Right ventricle myocardium inferior (tissue), 1 donor: ENCODE measurements at regions of chr17 and their contacts with region 1.

Region 1: GRCh38 chr17:2401426-2402221 is 764 bp upstream of the MNT start:
- DNase-seq: peak; percentile 100
- ATAC-seq: peak; percentile 71

Region 2: DNA sequence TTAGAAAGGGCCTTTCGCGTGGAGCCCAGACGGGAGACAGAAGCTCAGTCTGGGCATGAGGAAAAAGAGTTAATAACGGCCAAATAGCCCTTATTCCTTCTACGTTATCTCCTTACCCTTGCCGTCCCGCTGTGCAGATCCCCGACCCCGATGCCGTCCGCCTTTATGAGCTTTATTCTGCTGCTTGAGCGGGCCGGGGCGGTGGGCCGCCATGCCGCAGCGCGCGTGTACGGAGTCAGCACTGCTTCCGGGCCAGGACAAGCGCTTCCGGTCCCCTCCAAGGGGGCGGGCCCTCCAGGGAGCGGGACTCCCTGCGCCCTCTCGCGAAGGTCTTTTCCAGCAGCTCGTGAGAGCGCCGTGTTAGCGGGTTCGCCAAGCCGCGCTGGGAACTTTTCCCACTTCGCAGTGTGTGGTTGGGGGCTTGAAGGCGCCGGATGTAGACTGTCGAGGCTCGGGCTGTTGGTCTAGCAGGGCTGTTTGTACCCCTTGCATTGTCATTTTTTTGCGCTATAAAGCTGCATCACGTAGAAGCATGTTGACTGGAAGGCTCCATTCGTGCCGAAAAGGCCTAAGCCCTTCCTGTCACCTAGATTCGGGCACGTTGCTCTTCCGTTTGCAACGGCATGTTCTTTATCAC is 65.3 kb before region 1 on chr17 and contains the start of gene TSR1:
- intact Hi-C with region 1: loop called (anchors 5 kb)
- DNase-seq: peak; percentile 95
- ATAC-seq: peak; percentile 97
- total RNA-seq, gene TSR1: 20.2 TPM

Region 3: GRCh38 chr17:2416010-2416734 is 14.5 kb after region 1 on chr17:
- intact Hi-C with region 1: loop called (anchors 1 kb)
- DNase-seq: peak; percentile 93
- ATAC-seq: peak; percentile 75

Region 4: GRCh38 chr17:2711601-2712299 is 310.1 kb after region 1 on chr17 and contains the start of gene CLUH:
- intact Hi-C with region 1: loop called (anchors 5 kb)
- DNase-seq: peak; percentile 99
- ATAC-seq: peak; percentile 89
- total RNA-seq, gene CLUH: 180 TPM